Stomach (tissue), 19 donors: ENCODE measurements at regions of chr2 and their contacts with region 1.

Region 1: GRCh38 chr2:191521608-191522208 is 156.2 kb upstream of the NABP1 start:
- DNase-seq: peak in 1 of 2 donors; percentile 52
- H3K4me3 ChIP-seq: no peak overlapping the region
- H3K27ac ChIP-seq: no peak overlapping the region
- H3K4me1 ChIP-seq: peaks cover 0 to 3% (median 0%) of the 10 kb centered on the region in 4 donors
- H3K27me3 ChIP-seq: no peaks in the 10 kb centered on the region
- CTCF ChIP-seq: peak in 5 of 7 experiments; percentile 44 to 81 (median 76)
- EP300 ChIP-seq: no peak
- POLR2A ChIP-seq: no peak

Region 2: DNA sequence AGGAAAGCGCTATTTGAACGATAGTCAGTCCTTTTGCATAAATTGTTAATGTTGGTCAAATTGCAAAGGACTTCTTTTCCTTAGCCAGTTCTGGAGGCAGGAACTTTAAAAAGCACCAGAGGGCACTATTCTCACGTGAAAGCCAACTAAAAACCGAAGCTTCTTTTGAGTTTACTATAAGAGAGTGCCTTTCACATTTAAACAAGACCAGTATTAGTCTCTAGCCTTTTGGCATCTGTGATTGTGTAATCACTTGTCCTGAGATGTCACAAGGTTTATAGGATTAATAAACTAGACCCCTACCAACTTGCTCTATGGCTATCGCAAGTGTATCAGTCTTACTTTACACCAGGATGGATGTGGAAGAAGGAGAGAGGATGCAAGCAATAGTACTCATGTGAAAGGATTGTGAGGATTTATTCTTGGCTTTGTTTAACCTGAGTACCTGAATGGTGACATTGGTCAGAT is 356.5 kb before region 1 on chr2:
- intact Hi-C with region 1: loop called (anchors 5 kb)
- DNase-seq: peak in 1 of 2 donors; percentile 75
- H3K4me3 ChIP-seq: no peak overlapping the region
- H3K27ac ChIP-seq: no peak overlapping the region
- H3K4me1 ChIP-seq: peaks cover 0 to 23% (median 9%) of the 10 kb centered on the region in 4 donors
- H3K27me3 ChIP-seq: no peaks in the 10 kb centered on the region
- CTCF ChIP-seq: peak in 4 of 7 experiments; percentile 49 to 67 (median 56)
- EP300 ChIP-seq: no peak
- POLR2A ChIP-seq: no peak